ENCODE measurements at regions of chrX and their contacts with region 1.

Region 1: DNA sequence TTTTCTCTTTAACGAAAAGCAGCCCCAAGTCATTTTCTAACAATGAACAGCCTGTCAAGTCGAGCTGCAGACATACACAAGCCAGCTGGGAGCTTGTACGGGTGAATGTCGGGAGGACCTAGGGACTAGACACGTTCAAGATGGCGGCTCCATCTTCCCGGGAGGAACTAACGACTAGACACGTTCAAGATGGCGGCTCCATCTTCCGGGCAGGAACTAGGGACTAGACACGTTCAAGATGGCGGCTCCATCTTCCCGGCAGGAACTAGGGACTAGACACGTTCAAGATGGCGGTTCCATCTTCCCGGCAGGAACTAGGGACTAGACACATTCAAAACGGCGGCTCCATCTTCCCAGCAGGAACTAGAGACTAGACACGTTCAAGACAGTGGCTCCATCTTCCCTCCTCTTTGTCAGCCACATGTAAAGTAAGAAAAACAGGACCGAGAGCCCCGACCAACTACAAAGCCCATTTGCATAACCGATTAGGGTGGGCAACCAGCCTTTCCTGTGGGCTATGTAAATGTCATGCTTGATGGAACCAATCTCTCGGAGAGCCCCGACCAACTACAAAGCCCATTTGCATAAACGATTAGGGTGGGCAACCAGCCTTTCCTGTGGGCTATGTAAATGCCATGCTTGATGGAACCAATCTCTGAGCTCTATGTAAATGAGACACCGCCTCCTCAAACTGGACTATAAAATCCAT is 175.5 kb downstream of the DHRSX start:
- DNase-seq: no peak
- H3K4me3 ChIP-seq: peak overlapping the region; percentile 25 to 67 (median 50)
- H3K27ac ChIP-seq: peak overlapping the region in 3 of 4 donors; percentile 49 to 75 (median 73)
- H3K4me1 ChIP-seq: peaks cover 0 to 17% (median 10%) of the 10 kb centered on the region in 4 donors
- H3K27me3 ChIP-seq: no peaks in the 10 kb centered on the region
- CTCF ChIP-seq: no peak
- EP300 ChIP-seq: no peak
- POLR2A ChIP-seq: no peak

Region 2: DNA sequence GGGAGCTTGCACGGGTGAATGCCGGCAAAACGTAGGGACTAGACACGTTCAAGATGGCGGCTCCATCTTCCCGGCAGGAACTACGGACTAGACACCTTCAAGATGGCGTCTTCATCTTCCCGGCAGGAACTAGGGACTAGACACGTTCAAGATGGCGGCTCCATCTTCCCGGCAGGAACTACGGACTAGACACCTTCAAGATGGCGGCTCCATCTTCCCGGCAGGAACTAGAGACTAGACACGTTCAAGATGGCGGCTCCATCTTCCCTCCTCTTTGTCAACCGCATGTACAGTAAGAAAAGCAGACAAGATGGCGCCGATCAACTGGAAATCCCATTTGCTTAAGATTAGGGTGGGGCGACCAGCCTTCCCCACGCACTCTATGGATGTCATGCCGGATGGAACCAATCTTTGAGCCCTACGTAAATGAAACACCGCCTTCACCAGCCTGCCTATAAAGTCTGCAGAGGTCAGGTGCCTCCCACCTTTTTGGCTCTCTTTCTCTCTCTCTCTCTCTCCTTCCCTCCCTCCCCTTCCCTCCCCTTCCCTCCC is 1335.2 kb before region 1 on chrX:
- intact Hi-C with region 1: loop called (anchors 5 kb)
- DNase-seq: no peak
- H3K4me3 ChIP-seq: peak overlapping the region in 3 of 4 donors; percentile 3 to 49 (median 43)
- H3K27ac ChIP-seq: peak overlapping the region in 2 of 4 donors; percentile 38 to 64
- H3K4me1 ChIP-seq: peaks cover 0 to 5% (median 0%) of the 10 kb centered on the region in 4 donors
- H3K27me3 ChIP-seq: no peaks in the 10 kb centered on the region
- CTCF ChIP-seq: no peak
- EP300 ChIP-seq: no peak
- POLR2A ChIP-seq: no peak

Region 3: GRCh38 chrX:2188330-2188792 is 136.9 kb before region 1 on chrX:
- intact Hi-C with region 1: no loop called
- DNase-seq: no peak
- H3K4me3 ChIP-seq: no peak overlapping the region
- H3K27ac ChIP-seq: no peak overlapping the region
- H3K4me1 ChIP-seq: no peaks in the 10 kb centered on the region
- H3K27me3 ChIP-seq: no peaks in the 10 kb centered on the region
- CTCF ChIP-seq: no peak
- EP300 ChIP-seq: no peak
- POLR2A ChIP-seq: no peak

Region 4: GRCh38 chrX:2500267-2501075 is 175.2 kb after region 1 on chrX and contains the starts of genes DHRSX and ZBED1:
- intact Hi-C with region 1: loop called (anchors 5 kb)
- DNase-seq: no peak
- H3K4me3 ChIP-seq: peak within 1 kb of the TSS; percentile 77 to 92 (median 84)
- H3K27ac ChIP-seq: peak within 1 kb of the TSS; percentile 86 to 96 (median 91)
- H3K4me1 ChIP-seq: peaks cover 24 to 49% (median 45%) of the 10 kb centered on the region in 4 donors
- H3K27me3 ChIP-seq: no peaks in the 10 kb centered on the region
- CTCF ChIP-seq: peak in 1 of 3 experiments; percentile 29
- EP300 ChIP-seq: no peak
- POLR2A ChIP-seq: no peak
- total RNA-seq, gene DHRSX: 19.6 to 22.4 (median 21.0) TPM
- total RNA-seq, gene ZBED1: 32.8 to 44.8 (median 39.5) TPM

Region 5: GRCh38 chrX:2595258-2595657 is 270.0 kb after region 1 on chrX:
- intact Hi-C with region 1: loop called (anchors 10 kb)
- DNase-seq: no peak
- H3K4me3 ChIP-seq: no peak overlapping the region
- H3K27ac ChIP-seq: no peak overlapping the region
- H3K4me1 ChIP-seq: peaks cover 0 to 9% (median 4%) of the 10 kb centered on the region in 4 donors
- H3K27me3 ChIP-seq: no peaks in the 10 kb centered on the region
- CTCF ChIP-seq: no peak
- EP300 ChIP-seq: no peak
- POLR2A ChIP-seq: no peak

Region 6: GRCh38 chrX:2748181-2748814 is 423.1 kb after region 1 on chrX:
- intact Hi-C with region 1: no loop called
- DNase-seq: no peak
- H3K4me3 ChIP-seq: no peak overlapping the region
- H3K27ac ChIP-seq: no peak overlapping the region
- H3K4me1 ChIP-seq: peaks cover 0 to 14% (median 6%) of the 10 kb centered on the region in 4 donors
- H3K27me3 ChIP-seq: no peaks in the 10 kb centered on the region
- CTCF ChIP-seq: no peak
- EP300 ChIP-seq: no peak
- POLR2A ChIP-seq: no peak

Measured in esophagus muscularis mucosa (tissue), 4 donors.